PC-9 (cell line): ENCODE measurements at regions of chr7 and their contacts with region 1.

Region 1: DNA sequence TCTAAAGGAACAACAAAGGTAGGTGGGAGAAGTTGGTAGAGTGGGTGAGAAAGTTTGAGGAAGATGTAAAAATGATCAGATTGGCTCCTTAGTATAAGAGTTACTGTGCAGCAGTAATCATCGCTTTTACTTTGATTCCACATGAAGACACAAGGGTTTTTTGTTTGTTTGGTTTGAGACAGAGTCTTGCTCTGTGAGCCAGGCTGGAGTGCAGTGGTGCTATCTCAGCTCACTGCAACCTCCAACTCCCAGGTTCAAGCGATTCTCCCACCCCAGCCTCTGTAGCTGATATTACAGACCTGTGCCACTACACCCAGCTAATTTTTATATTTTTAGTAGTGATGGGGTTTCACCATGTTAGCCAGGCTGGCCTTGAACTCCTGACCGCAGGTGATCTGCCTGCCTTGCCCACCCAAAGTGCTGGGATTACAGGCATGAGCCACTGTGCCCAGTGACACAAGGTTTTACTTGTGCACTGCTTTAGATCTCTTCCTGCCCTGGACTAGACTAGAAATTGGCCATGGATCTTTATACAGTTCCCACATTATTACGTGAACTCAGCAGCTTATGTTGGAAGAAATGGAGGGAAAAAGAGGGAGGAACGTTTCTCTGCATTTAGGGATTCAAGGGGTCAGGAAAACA is 10.7 kb downstream of the LUC7L2 start:
- DNase-seq: peak in 1 of 2 experiments; percentile 9
- H3K4me3 ChIP-seq: no peak overlapping the region
- H3K27ac ChIP-seq: no peak overlapping the region
- H3K4me1 ChIP-seq: no peaks in the 10 kb centered on the region
- H3K27me3 ChIP-seq: no peaks in the 10 kb centered on the region
- CTCF ChIP-seq: no peak

Region 2: DNA sequence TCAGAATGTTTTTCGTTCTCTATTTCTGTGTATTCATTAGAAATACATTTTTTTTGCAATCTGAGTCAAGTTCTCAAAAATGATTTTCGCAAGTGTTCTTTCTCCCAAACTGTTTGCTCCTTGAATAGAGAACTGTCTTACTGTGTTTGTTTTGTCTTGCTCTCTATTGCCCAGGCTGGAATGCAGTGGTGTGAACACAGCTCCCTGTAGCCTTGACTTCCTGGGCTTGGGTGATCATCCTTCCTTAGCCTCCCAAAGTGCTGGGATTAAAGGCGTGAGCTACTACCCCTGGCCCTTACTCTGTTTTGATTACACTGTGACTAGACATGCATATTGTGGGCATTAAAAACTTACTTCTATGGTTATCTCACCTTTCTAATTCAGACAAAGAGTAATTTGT is 46.0 kb after region 1 on chr7:
- CTCF ChIA-PET with region 1: no interaction called
- POLR2A ChIA-PET with region 1: no interaction called
- intact Hi-C with region 1: loop called (anchors 5 kb)
- DNase-seq: no peak
- H3K4me3 ChIP-seq: no peak overlapping the region
- H3K27ac ChIP-seq: no peak overlapping the region
- H3K4me1 ChIP-seq: no peaks in the 10 kb centered on the region
- H3K27me3 ChIP-seq: no peaks in the 10 kb centered on the region
- CTCF ChIP-seq: no peak